Sciatic nerve (tissue), 2 donors: ENCODE measurements at regions of chr1 and their contacts with region 1.

Region 1: GRCh38 chr1:16067127-16067768 is 6.2 kb downstream of the FAM131C start:
- DNase-seq: no peak
- ATAC-seq: no peak

Region 2: GRCh38 chr1:16041200-16041599 is 26.0 kb before region 1 on chr1:
- intact Hi-C with region 1: loop called (anchors 1 kb)
- DNase-seq: no peak
- ATAC-seq: no peak

Region 3: DNA sequence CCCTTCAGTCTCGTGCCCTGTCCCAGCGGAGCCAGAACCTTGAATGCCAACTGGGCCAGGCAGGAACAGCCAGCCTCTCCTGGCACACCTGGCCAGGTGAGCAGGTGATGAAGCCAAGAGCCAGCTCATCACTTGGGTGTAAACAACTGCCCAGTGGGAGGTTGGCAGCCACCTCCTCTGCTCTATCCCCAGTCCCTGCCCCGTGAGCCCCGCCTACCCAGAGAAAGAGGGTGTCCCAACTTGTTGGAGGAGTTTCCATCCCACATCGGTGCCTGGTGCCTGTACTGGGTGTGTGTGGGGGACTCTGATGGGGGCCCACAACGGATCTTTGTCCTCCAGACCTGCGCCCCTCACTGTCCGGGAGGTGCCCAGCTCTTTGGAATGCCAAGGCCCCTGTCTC is 24.0 kb after region 1 on chr1:
- intact Hi-C with region 1: no loop called
- DNase-seq: no peak
- ATAC-seq: no peak